Activated naive CD4-positive, alpha-beta T cell treated with anti-CD3 and anti-CD28 coated beads for 36 hours (primary cell): ENCODE measurements at regions of chr4 and their contacts with region 1.

Region 1: GRCh38 chr4:80036949-80037685 is 35.9 kb downstream of the ANTXR2 start:
- DNase-seq: no peak
- H3K4me3 Mint-ChIP-seq: peak overlapping the region; percentile 70
- H3K27ac Mint-ChIP-seq: peak overlapping the region; percentile 86
- H3K4me1 Mint-ChIP-seq: peaks cover 32% of the 10 kb centered on the region
- H3K27me3 Mint-ChIP-seq: no peaks in the 10 kb centered on the region

Region 2: DNA sequence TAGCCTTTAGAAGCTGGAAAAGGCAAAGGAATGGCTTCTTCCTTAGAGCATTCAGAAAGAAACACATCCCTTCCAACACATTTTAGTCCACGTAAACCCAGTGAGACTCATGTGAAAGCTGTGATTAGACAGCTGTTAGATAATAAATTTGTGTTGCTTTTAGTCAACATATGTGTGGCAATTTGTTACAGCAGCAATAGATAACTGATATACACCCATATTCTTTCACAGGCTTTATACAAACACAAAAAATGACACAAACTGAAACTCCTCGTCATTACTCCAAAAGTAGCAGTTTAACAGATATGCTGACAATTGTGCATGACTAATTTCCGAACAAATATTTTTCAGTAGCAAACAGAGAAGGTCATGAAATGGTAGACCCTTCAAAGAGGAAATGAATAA is 29.4 kb before region 1 on chr4:
- CTCF ChIA-PET with region 1: no interaction called
- intact Hi-C with region 1: loop called (anchors 2 kb)
- DNase-seq: no peak
- H3K4me3 Mint-ChIP-seq: no peak overlapping the region
- H3K27ac Mint-ChIP-seq: no peak overlapping the region
- H3K4me1 Mint-ChIP-seq: peaks cover 38% of the 10 kb centered on the region
- H3K27me3 Mint-ChIP-seq: no peaks in the 10 kb centered on the region